PC-9 (cell line): ENCODE measurements at regions of chr3 and their contacts with region 1.

Region 1: GRCh38 chr3:123799544-123800361 is 84.4 kb downstream of the MYLK start:
- DNase-seq: peak in 1 of 2 experiments; percentile 26
- H3K4me3 ChIP-seq: no peak overlapping the region
- H3K27ac ChIP-seq: no peak overlapping the region
- H3K4me1 ChIP-seq: no peaks in the 10 kb centered on the region
- H3K27me3 ChIP-seq: no peaks in the 10 kb centered on the region
- CTCF ChIP-seq: no peak

Region 2: DNA sequence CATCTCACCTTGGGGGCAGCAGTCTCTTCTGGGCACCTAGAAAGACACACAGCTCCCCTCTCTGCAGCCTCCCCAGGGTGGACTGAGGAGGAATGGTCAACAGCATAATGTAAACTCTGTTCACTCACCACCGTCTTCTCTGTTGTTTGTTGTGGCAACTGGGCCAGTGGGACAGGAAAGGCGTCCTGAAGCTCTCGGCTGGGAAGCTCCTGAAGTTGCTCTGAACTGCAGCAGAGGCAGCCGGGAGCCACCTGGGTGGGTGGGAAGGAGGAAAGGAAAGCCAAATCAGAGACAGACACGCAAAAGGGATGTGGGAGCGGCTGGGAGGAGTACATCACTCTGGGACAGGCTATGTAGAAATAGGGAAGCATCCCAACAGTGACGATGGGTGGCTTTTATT is 31.7 kb after region 1 on chr3:
- CTCF ChIA-PET with region 1: no interaction called
- POLR2A ChIA-PET with region 1: interaction called, 11 read pairs
- intact Hi-C with region 1: no loop called
- DNase-seq: no peak
- H3K4me3 ChIP-seq: no peak overlapping the region
- H3K27ac ChIP-seq: no peak overlapping the region
- H3K4me1 ChIP-seq: peaks cover 11% of the 10 kb centered on the region; the same call in 1 of the 2 replicates
- H3K27me3 ChIP-seq: no peaks in the 10 kb centered on the region
- CTCF ChIP-seq: no peak